A673 (cell line): ENCODE measurements at regions of chr6 and their contacts with region 1.

Region 1: DNA sequence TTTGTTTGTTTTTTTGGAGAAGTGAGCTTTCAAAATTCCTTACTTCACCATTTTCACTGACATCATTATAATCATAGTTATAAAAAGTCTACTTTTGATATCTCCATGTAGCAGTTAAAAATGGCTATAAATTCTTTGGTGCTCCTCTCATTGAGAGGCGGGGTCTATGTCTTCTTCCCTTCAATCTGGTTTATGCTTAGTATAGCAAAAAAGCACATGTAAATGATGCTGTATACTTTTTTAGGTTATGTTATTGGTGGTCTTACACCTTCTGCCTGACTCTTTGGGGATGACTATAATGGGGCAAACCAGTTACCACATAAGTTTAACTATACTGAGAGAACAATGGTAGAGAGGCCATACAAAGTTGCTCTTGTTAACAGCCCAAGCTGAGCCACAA is 289.6 kb downstream of the EPM2A start:
- DNase-seq: no peak
- H3K4me3 ChIP-seq: no peak overlapping the region
- H3K27ac ChIP-seq: no peak overlapping the region
- H3K4me1 ChIP-seq: no peaks in the 10 kb centered on the region
- H3K27me3 ChIP-seq: no peaks in the 10 kb centered on the region
- CTCF ChIP-seq: no peak

Region 2: DNA sequence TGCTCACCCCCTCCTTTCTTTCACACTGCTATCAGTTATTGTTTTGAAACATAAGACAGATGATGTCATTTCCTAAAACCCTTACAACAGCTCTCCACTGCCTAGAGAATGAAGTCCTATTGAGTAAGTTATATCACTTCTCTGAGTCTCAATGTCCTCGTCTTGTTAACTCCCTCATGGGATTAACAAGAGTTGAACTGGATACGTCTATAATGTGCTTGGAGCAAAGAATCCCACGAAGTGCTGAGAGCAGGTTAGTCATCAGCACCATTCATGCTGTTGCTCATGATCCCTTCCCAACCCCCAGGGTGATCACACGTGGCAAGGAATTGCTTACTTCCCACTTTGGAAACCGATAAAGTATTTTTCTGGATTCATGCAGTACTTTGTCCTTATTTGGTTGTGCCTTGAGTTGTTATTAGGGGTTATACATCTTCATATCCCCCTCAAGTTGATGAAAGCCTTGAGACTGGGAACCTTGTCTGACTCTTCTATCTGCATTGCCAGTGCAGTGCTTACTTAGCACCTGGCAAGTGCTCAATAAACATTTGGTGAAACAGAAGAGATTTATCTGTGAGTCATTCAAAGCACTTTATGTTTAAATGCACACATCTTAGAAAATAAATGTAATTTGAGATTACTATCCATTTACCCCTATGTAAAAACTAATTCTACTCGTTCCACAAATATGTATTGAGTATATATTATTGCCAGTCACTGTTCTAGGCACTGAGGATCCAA is 197.8 kb before region 1 on chr6:
- CTCF ChIA-PET with region 1: no interaction called
- POLR2A ChIA-PET with region 1: no interaction called
- intact Hi-C with region 1: no loop called
- DNase-seq: peak; percentile 83
- H3K4me3 ChIP-seq: no peak overlapping the region
- H3K27ac ChIP-seq: peak overlapping the region; percentile 66
- H3K4me1 ChIP-seq: peaks cover 34% of the 10 kb centered on the region
- H3K27me3 ChIP-seq: no peaks in the 10 kb centered on the region
- CTCF ChIP-seq: no peak

Region 3: GRCh38 chr6:145704143-145704781 is 258.6 kb after region 1 on chr6:
- CTCF ChIA-PET with region 1: no interaction called
- POLR2A ChIA-PET with region 1: no interaction called
- intact Hi-C with region 1: loop called (anchors 10 kb)
- DNase-seq: peak; percentile 54
- H3K4me3 ChIP-seq: no peak overlapping the region
- H3K27ac ChIP-seq: no peak overlapping the region
- H3K4me1 ChIP-seq: peaks cover 14% of the 10 kb centered on the region
- H3K27me3 ChIP-seq: no peaks in the 10 kb centered on the region
- CTCF ChIP-seq: peak; percentile 69

Region 4: GRCh38 chr6:145809211-145809610 is 363.5 kb after region 1 on chr6:
- CTCF ChIA-PET with region 1: no interaction called
- POLR2A ChIA-PET with region 1: no interaction called
- intact Hi-C with region 1: no loop called
- DNase-seq: no peak
- H3K4me3 ChIP-seq: no peak overlapping the region
- H3K27ac ChIP-seq: no peak overlapping the region
- H3K4me1 ChIP-seq: peaks cover 18% of the 10 kb centered on the region
- H3K27me3 ChIP-seq: no peaks in the 10 kb centered on the region
- CTCF ChIP-seq: no peak